ENCODE measurements at regions of chr5 and their contacts with region 1.

Region 1: GRCh38 chr5:157076558-157076957 is 17.6 kb upstream of the HAVCR1 start:
- DNase-seq: no peak
- ATAC-seq: peak; percentile 69
- H3K4me3 ChIP-seq: no peak overlapping the region
- H3K27ac ChIP-seq: no peak overlapping the region
- H3K4me1 ChIP-seq: peaks cover 17% of the 10 kb centered on the region
- H3K27me3 ChIP-seq: no peaks in the 10 kb centered on the region
- CTCF ChIP-seq: no peak
- EP300 ChIP-seq: no peak
- POLR2A ChIP-seq: no peak
- RAD21 ChIP-seq: no peak

Region 2: DNA sequence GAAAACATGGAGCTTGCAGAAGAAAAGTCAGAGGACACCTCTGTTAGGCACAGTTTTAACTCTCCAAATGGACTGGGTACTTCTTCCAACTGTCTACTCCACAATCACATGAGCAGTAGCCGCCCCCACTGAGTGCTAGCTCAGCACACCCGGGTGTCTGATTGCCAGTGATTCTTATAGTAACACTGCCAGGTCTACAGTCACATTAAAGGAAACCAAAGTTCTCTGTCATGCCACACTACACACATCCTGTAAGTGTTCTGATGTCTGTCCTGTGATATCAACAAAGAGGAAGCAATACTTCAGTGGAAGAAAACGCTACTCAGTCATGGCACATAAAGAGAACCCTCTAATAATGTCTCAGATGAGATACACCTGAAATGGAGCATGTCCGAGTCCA is 32.4 kb after region 1 on chr5 and contains the start of gene HAVCR2:
- CTCF ChIA-PET with region 1: interaction called, 3 read pairs
- POLR2A ChIA-PET with region 1: interaction called, 3 read pairs
- RAD21 ChIA-PET with region 1: interaction called, 6 read pairs
- SMC1A ChIA-PET with region 1: interaction called, 22 read pairs
- in situ Hi-C with region 1: no loop called
- intact Hi-C with region 1: loop called (anchors 2 kb)
- DNase-seq: peak; percentile 83
- ATAC-seq: peak; percentile 90
- H3K4me3 ChIP-seq: peak within 1 kb of the TSS; percentile 46
- H3K27ac ChIP-seq: peak within 1 kb of the TSS; percentile 87
- H3K4me1 ChIP-seq: peaks cover 12% of the 10 kb centered on the region
- H3K27me3 ChIP-seq: no peaks in the 10 kb centered on the region
- CTCF ChIP-seq: no peak
- EP300 ChIP-seq: 0 out of 4 replicates have a peak, but pooled peaks of 1 of the 2 experiments have one; percentile 0
- POLR2A ChIP-seq: 0 out of 2 replicates have a peak, but pooled peaks have one; percentile 41
- RAD21 ChIP-seq: no peak
- polyA plus RNA-seq, gene HAVCR2: 7.2 to 7.5 TPM